A673 (cell line): ENCODE measurements at regions of chr11 and their contacts with region 1.

Region 1: DNA sequence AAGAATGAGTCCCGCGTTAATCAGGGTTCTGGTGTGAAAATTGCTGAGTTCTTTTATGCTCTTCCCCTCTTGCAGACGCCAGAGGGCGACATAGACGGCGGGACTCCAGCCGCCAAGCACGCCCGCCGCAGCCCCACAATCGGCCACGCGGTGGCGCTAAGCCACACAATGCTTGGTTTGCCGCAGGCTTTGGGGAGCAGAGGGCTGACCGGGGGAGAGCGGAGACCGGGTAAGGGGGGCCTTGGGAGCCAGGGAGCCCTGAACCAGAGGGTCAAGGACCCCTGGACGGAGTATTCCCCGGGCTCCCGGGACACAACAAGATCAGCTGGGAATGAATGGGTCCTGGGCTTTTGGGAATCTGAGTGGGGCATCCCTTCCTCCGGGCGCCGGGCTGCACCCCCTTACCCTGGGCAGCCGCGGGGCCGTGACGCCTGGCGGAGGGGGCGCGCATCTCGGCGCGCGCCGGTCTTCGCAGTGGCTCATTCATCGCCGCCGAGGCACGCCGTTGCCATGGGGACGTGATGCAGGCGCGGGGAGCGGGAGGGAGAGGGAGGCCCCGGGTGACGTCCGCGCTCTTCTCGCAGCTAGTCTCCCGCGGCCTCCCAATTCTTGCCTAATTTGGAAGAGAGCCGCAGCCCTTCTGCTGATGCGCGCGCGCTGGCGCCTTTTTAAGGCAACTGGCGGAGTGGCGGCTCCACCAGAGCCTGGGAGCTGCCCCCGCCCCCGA is 12.2 kb upstream of the NPAS4 start:
- DNase-seq: peak; percentile 97
- H3K4me3 ChIP-seq: peak overlapping the region; percentile 43
- H3K27ac ChIP-seq: peak overlapping the region; percentile 76
- H3K4me1 ChIP-seq: peaks cover 4% of the 10 kb centered on the region
- H3K27me3 ChIP-seq: peaks cover 26% of the 10 kb centered on the region
- CTCF ChIP-seq: peak; percentile 100

Region 2: DNA sequence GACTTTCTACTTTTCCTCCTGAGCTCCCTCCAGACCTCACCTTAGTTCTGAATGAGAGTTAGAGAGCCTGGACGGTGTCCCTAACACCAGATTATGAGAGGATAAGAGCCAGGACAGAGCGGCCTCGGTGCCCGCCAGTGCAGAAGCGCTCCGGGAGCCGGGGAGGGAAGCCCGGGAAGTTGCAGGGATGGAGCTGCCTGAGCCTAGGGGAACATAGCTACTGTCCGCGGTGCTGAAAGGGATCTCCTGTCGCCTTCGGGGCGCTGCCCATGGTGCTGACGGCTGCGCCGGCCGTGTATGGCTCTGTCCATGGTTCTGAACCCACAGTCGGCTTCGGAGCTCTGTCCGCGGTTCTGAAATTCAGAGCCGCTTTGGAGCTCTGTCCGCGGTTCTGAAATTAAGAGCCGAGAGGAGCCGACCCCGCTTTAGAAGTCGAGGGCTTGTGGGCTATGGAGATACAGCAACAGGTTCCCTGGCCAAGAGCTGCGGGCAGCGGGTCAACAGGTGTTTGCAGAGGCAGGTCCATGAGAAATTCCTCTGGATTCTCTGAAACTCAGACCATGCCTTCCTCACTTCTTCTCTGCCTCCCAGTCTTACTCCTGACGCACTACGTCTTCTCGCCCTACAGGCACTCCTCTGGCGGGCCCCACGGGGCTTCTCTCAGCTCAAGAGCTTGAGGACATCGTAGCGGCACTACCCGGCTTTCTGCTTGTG is 13.0 kb after region 1 on chr11:
- CTCF ChIA-PET with region 1: interaction called, 10 read pairs
- POLR2A ChIA-PET with region 1: no interaction called
- intact Hi-C with region 1: no loop called
- DNase-seq: peak; percentile 94
- H3K4me3 ChIP-seq: no peak overlapping the region
- H3K27ac ChIP-seq: no peak overlapping the region
- H3K4me1 ChIP-seq: no peaks in the 10 kb centered on the region
- H3K27me3 ChIP-seq: peaks cover 24% of the 10 kb centered on the region
- CTCF ChIP-seq: no peak

Region 3: DNA sequence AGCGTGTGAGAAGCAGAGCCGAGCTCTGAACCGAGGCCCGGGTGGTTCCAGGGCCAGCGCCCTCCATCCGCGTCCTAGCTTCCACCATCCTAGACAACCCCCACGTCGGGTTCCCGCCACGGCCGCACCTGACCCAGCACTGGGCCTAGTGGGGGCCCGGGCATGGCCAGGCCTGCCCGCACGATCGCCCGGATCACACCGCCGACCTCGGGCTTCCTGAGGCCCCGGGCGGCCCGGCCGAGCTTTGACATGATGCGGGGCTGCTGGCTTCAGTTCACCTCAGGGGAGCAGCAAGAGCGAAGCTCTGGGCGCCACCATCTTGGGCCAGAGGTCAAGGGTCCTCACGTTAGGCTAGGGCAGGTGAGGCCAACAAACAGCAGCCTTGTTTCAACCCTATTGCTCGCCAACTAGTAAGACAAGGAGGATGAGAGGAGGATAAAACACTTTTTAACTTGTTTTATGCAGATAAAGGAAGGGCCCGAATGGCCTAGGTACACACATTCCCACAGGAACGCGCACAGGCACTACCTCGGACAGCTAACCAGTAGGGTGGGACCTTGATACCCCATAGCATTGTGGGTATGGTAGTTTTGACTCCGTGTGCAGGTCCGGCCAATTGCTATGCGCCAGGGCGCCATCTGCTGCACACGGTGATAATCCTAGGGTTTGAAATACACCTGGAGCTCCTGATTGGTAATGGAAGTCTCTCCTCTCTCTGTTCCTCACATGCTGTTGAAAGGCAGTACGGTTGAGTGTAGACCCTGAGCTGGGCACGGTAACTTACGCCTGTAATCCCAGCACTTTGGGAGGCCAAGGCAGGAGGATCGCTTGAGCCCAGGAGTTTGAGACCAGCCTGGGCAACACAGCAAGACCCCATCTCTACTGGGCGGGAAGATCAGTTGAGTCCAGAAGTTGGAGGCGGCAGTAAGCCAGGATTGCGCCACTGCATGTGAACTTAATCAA is 30.1 kb after region 1 on chr11 and contains the start of gene MRPL11:
- CTCF ChIA-PET with region 1: no interaction called
- POLR2A ChIA-PET with region 1: no interaction called
- intact Hi-C with region 1: loop called (anchors 2 kb)
- DNase-seq: peak; percentile 97
- H3K4me3 ChIP-seq: peak within 1 kb of the TSS; percentile 66
- H3K27ac ChIP-seq: peak within 1 kb of the TSS; percentile 85
- H3K4me1 ChIP-seq: peaks cover 4% of the 10 kb centered on the region
- H3K27me3 ChIP-seq: no peaks in the 10 kb centered on the region
- CTCF ChIP-seq: peak; percentile 89
- total RNA-seq, gene MRPL11: 96.5 and 97.9 TPM in 2 replicates

Region 4: GRCh38 chr11:66677599-66678375 is 269.1 kb after region 1 on chr11 and contains the start of gene RBM4B:
- CTCF ChIA-PET with region 1: interaction called, 3 read pairs
- POLR2A ChIA-PET with region 1: interaction called, 3 read pairs
- intact Hi-C with region 1: loop called (anchors 1 kb)
- DNase-seq: peak; percentile 99
- H3K4me3 ChIP-seq: peak within 1 kb of the TSS; percentile 61
- H3K27ac ChIP-seq: peak within 1 kb of the TSS; percentile 94
- H3K4me1 ChIP-seq: peaks cover 11% of the 10 kb centered on the region
- H3K27me3 ChIP-seq: no peaks in the 10 kb centered on the region
- CTCF ChIP-seq: no peak
- total RNA-seq, gene RBM4B: 35.0 and 40.5 TPM in 2 replicates

Region 5: DNA sequence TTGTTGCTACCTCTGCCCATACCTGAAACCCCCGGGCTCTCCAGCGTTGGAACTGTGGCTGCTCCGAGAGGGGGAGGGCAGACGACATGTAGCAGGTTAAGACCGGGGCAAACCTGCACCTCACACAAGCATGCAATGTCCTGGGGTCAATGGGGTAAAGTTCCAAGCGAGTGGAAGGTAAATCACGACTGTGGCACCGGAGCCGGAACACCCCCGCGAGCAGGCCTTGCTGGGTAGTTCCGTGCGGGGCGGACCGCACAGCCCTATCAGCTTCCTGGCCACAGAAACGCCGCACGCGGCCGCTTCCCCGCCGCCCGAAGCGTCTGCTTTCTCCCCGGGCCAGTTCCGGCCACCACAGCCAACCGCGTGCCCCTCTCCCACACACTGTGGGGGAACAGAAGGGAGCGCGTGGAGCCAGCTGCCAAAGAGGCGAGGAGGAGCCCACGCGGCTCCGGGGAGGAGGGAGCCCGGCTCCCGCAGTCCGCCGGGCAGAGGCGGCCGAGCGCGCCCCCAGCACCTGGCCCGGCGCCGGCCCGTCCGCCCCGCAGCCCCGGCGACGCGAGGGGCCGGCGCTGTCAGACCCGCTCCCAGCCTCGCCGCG is 318.7 kb after region 1 on chr11:
- CTCF ChIA-PET with region 1: no interaction called
- POLR2A ChIA-PET with region 1: no interaction called
- intact Hi-C with region 1: no loop called
- DNase-seq: no peak
- H3K4me3 ChIP-seq: peak overlapping the region; percentile 55
- H3K27ac ChIP-seq: peak overlapping the region; percentile 0
- H3K4me1 ChIP-seq: no peaks in the 10 kb centered on the region
- H3K27me3 ChIP-seq: peaks cover 14% of the 10 kb centered on the region
- CTCF ChIP-seq: no peak